ENCODE measurements at regions of chr19 and their contacts with region 1.

Region 1: GRCh38 chr19:15555759-15556633 is 47.7 kb downstream of the CYP4F22 start:
- DNase-seq: peak; percentile 84 to 87 (median 86)
- H3K4me3 ChIP-seq: peak overlapping the region; percentile 21 to 74 (median 22)
- H3K4me3 Mint-ChIP-seq: peak overlapping the region; percentile 82 to 96
- H3K27ac ChIP-seq: peak overlapping the region in 1 of 2 donors; percentile 30
- H3K27ac Mint-ChIP-seq: peak overlapping the region; percentile 69 to 85 (median 77)
- H3K4me1 ChIP-seq: peaks cover 16 to 28% of the 10 kb centered on the region in 2 donors
- H3K4me1 Mint-ChIP-seq: peaks cover 20% of the 10 kb centered on the region
- H3K27me3 ChIP-seq: peaks cover 0 to 13% of the 10 kb centered on the region in 2 donors
- H3K27me3 Mint-ChIP-seq: peaks cover 18 to 35% (median 29%) of the 10 kb centered on the region in 3 donors
- CTCF ChIP-seq: peak; percentile 87

Region 2: GRCh38 chr19:15091901-15092753 is 463.9 kb before region 1 on chr19:
- intact Hi-C with region 1: loop called in 1 of 2 experiments (anchors 2 kb)
- DNase-seq: peak; percentile 58 to 72 (median 63)
- H3K4me3 ChIP-seq: no peak overlapping the region
- H3K4me3 Mint-ChIP-seq: no peak overlapping the region
- H3K27ac ChIP-seq: no peak overlapping the region
- H3K27ac Mint-ChIP-seq: no peak overlapping the region
- H3K4me1 ChIP-seq: peaks cover 0 to 11% of the 10 kb centered on the region in 2 donors
- H3K4me1 Mint-ChIP-seq: peaks cover 12% of the 10 kb centered on the region
- H3K27me3 ChIP-seq: no peaks in the 10 kb centered on the region
- H3K27me3 Mint-ChIP-seq: peaks cover 7 to 10% (median 9%) of the 10 kb centered on the region in 3 donors
- CTCF ChIP-seq: peak; percentile 79

Region 3: DNA sequence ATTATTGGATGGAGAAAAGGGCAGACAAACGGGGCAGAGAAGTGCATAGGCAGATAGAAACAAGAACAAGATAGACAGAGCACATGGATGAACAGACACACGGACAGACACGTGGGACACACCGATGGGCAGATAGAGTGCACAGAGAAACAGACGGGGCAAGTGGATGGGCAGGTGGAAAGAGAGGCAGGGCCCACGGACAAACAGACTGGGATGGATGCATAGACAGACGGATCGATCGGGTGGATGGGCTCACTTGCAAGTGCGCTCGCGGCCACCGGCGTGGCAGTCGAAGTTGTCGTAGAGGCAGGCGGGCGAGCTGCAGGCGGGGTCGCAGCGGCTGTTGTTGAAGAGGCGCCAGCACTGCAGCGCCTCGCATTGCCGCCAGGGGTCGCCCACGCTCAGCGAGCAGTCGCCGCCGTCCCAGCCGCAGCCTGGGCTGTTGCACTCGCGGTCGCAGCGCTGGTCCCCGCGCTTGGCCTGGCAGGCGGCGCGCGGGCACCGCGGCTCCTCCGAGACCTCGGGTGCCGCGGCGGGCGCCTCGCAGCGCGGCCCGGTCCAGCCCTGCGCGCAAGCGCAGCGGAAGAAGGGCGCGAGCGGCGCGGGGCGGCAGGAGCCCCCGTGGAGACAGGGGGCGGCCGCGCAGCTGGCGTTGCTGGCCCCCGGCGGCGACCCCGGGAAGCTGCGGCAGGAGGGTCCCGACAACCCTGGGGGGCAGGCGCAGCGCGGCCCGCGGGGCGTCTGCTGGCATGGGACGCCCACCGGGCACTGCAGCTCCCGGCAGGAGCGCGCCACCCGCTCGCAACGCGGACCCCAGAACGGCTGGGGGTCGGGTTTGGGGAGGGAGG is 378.5 kb before region 1 on chr19:
- intact Hi-C with region 1: loop called (anchors 5 to 10 kb)
- DNase-seq: peak; percentile 82 to 86 (median 85)
- H3K4me3 ChIP-seq: peak overlapping the region in 1 of 3 experiments; percentile 44
- H3K4me3 Mint-ChIP-seq: peak overlapping the region in 1 of 2 donors; percentile 82
- H3K27ac ChIP-seq: no peak overlapping the region
- H3K27ac Mint-ChIP-seq: no peak overlapping the region
- H3K4me1 ChIP-seq: peaks cover 5 to 11% of the 10 kb centered on the region in 2 donors
- H3K4me1 Mint-ChIP-seq: peaks cover 6% of the 10 kb centered on the region
- H3K27me3 ChIP-seq: peaks cover 0 to 6% of the 10 kb centered on the region in 2 donors
- H3K27me3 Mint-ChIP-seq: peaks cover 14 to 25% (median 24%) of the 10 kb centered on the region in 3 donors
- CTCF ChIP-seq: peak; percentile 96

Region 4: DNA sequence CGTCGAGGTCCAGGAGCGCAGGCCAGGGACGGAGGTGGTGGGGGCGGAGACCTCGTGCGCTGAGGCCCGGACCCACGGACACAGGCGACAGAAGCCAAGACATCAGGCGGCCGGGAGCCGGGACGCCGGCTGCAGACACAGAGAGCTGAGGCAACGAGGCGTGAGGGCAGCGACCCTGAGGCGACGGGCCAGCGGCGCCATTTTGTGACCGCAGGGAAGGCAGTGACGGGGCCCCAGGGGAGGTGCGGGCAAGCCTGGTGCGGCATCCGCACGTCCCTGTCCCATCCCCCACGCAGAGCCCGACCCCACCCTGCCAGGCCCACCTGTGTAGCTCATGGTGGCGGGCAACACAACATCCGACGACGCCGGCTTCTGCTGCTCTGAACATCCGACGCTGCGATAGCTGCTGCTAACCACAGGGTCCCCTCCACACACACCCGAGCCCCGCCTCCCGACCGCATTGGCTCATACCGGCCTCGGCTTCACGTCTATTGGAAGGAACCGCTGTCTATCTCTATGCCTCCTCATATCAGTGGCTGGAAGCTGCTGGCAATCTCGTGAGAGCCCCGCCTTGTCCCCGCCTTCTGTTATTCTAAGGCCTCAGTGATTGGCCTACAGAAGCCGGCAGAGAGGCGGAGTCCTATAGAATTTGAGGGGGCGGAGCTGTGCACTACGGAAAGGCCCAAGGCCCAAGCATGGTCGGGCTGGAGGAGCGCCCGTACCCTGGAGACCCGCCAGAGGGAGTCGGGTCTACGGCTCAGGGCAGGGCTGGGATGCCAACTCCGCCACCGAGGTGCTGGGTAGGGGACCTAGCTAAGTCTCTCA is 137.2 kb before region 1 on chr19 and contains the start of gene AKAP8L:
- intact Hi-C with region 1: loop called (anchors 1 kb)
- DNase-seq: peak; percentile 99 to 100 (median 99)
- H3K4me3 ChIP-seq: peak within 1 kb of the TSS; percentile 86 to 97 (median 97)
- H3K4me3 Mint-ChIP-seq: peak within 1 kb of the TSS; percentile 97 to 99
- H3K27ac ChIP-seq: peak within 1 kb of the TSS; percentile 55 to 92
- H3K27ac Mint-ChIP-seq: peak within 1 kb of the TSS; percentile 90 to 99 (median 97)
- H3K4me1 ChIP-seq: peaks cover 19 to 26% of the 10 kb centered on the region in 2 donors
- H3K4me1 Mint-ChIP-seq: peaks cover 31% of the 10 kb centered on the region
- H3K27me3 ChIP-seq: no peaks in the 10 kb centered on the region
- H3K27me3 Mint-ChIP-seq: no peaks in the 10 kb centered on the region
- CTCF ChIP-seq: peak; percentile 77
- polyA plus RNA-seq, gene AKAP8L: 21.4 to 103 (median 39.0) TPM

Region 5: GRCh38 chr19:15479391-15480345 is 76.3 kb before region 1 on chr19 and contains the start of gene PGLYRP2:
- intact Hi-C with region 1: loop called (anchors 5 to 10 kb)
- DNase-seq: peak; percentile 37 to 48 (median 41)
- H3K4me3 ChIP-seq: no peak within 1 kb of the TSS
- H3K4me3 Mint-ChIP-seq: no peak within 1 kb of the TSS
- H3K27ac ChIP-seq: no peak within 1 kb of the TSS
- H3K27ac Mint-ChIP-seq: peak within 1 kb of the TSS in 1 of 7 donors; percentile 30
- H3K4me1 ChIP-seq: no peaks in the 10 kb centered on the region
- H3K4me1 Mint-ChIP-seq: peaks cover 4% of the 10 kb centered on the region
- H3K27me3 ChIP-seq: no peaks in the 10 kb centered on the region
- H3K27me3 Mint-ChIP-seq: peaks cover 0 to 7% (median 3%) of the 10 kb centered on the region in 3 donors
- CTCF ChIP-seq: peak; percentile 38
- polyA plus RNA-seq, gene PGLYRP2: 0.03 to 0.32 (median 0.15) TPM

Region 6: DNA sequence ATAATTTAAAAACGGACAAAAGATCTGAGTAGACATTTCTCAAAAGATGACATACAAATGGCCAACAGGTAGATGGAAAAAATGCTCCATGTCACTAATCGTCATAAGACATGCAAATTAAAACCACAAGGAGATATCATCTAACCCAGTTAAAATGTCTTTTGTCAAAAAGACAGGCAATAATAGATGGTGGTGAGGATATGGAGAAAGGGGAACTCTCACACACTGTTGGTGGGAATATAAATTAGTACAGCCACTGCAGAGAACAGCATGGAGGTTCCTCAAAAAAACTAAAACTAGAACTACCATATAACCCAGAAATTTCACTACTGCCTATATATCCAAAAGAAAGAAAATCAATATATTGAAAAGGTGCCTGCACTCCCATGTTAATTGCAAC is 430.7 kb after region 1 on chr19:
- intact Hi-C with region 1: no loop called
- DNase-seq: peak in 2 of 3 donors; percentile 17 to 23
- H3K4me3 ChIP-seq: no peak overlapping the region
- H3K4me3 Mint-ChIP-seq: peak overlapping the region in 1 of 2 donors; percentile 28
- H3K27ac ChIP-seq: no peak overlapping the region
- H3K27ac Mint-ChIP-seq: peak overlapping the region in 2 of 7 donors; percentile 9 to 30
- H3K4me1 ChIP-seq: peaks cover 34 to 42% of the 10 kb centered on the region in 2 donors
- H3K4me1 Mint-ChIP-seq: peaks cover 44% of the 10 kb centered on the region
- H3K27me3 ChIP-seq: no peaks in the 10 kb centered on the region
- H3K27me3 Mint-ChIP-seq: peaks cover 2 to 7% (median 2%) of the 10 kb centered on the region in 3 donors
- CTCF ChIP-seq: no peak